HCT116 (cell line): ENCODE measurements at regions of chr5 and their contacts with region 1.

Region 1: DNA sequence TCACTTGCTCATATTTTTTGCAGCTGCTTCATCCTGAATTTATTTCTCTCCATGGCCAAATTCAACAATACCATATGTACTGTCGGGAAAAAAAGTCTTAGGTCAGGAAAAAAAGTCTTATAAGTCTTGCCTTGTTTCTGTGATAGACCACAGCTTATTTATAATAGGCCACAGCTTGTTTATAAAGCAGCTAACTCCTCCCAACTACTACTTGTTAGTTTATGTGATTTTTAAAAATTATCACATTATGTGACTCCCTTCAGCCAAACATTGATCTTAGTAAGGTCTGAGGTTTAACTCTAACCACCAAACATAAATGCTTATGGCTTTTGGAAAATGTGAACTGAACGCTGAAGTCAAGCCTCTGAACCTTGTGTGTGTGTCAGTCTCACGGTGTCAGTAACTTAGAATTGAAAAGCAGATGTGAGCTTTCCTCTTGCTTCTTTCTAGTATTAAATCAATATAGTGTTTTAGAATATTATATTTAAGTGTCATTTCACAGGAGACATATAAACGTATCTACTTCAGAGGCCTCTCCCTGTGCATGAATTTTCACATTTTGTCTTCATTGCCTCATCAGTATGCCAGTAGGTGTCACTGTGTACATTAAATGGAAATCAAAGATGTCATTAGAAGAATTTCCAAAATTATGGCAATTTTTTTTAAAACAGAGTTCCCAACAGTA is 51.3 kb downstream of the SNX24 start:
- DNase-seq: peak; percentile 7
- ATAC-seq: no peak
- H3K4me3 ChIP-seq: no peak overlapping the region
- H3K27ac ChIP-seq: no peak overlapping the region
- H3K4me1 ChIP-seq: no peaks in the 10 kb centered on the region
- H3K27me3 ChIP-seq: no peaks in the 10 kb centered on the region
- CTCF ChIP-seq: peak; percentile 46 to 63 (median 52); a peak in 5 of 6 replicates
- POLR2A ChIP-seq: no peak
- RAD21 ChIP-seq: peak; percentile 65

Region 2: DNA sequence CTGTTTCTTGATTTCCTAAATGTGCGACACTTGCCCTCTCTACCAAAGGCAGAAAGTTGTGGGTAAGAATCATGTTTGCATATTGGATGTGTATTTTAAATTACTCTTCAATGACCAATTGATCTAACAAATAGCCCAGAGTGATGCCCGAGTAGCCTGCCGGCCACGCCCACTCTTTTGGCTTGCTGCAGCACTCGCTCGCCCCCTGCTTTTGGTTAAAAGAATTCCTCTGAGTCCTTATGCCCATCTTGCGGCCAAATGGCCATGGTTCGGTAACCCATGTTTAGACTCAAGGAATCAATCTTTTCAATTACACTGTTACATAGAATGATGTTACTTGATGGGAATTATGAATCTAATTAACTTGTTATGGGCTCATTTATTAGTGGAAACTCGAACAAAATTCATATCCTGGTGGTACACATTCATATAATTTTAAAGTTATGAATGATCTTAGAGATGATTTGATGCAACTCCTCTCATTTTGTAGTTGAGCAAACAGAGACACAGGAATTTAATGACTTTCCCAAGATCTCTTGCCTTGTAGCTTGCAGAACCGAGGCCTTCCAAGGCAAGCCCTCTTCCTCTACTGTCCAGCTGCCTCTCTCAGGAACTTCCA is 103.3 kb after region 1 on chr5:
- CTCF ChIA-PET with region 1: no interaction called
- POLR2A ChIA-PET with region 1: no interaction called
- RAD21 ChIA-PET with region 1: no interaction called
- intact Hi-C with region 1: loop called (anchors 5 kb)
- DNase-seq: peak; percentile 36
- ATAC-seq: peak; percentile 87
- H3K4me3 ChIP-seq: no peak overlapping the region
- H3K27ac ChIP-seq: no peak overlapping the region
- H3K4me1 ChIP-seq: no peaks in the 10 kb centered on the region
- H3K27me3 ChIP-seq: no peaks in the 10 kb centered on the region
- CTCF ChIP-seq: peak; percentile 54 to 77 (median 73); a peak in 5 of 6 replicates
- POLR2A ChIP-seq: no peak
- RAD21 ChIP-seq: peak; percentile 78

Region 3: DNA sequence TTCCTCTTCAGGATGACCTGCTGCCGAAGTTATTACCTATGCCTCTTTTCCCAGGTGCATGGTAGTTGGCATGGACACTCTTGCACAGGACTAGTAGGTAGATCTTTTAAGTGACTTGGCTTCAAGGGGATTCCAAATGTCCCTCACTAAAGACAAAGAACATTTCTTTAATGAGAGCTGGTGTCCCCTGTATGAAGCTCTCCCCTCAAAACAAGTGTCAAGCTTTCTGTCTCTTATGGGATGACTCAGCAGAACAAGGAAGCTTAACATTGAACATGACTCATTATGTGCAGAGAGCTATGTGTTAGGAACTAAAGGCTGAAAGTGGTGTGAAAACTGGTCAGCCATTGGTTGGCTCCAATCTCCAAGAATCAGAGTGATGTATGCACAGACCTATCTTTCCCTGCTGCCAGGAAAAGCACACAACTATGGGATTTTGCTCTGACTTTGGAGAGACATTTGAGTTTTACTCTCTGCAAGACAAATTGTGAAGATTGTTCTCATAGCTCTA is 312.8 kb after region 1 on chr5:
- CTCF ChIA-PET with region 1: no interaction called
- POLR2A ChIA-PET with region 1: no interaction called
- RAD21 ChIA-PET with region 1: no interaction called
- intact Hi-C with region 1: loop called (anchors 5 kb)
- DNase-seq: peak; percentile 48
- ATAC-seq: peak; percentile 81
- H3K4me3 ChIP-seq: no peak overlapping the region
- H3K27ac ChIP-seq: no peak overlapping the region
- H3K4me1 ChIP-seq: peaks cover 0 to 11% of the 10 kb centered on the region in 2 experiments; a peak in 2 of 4 replicates
- H3K27me3 ChIP-seq: no peaks in the 10 kb centered on the region
- CTCF ChIP-seq: no peak
- POLR2A ChIP-seq: no peak
- RAD21 ChIP-seq: no peak

Region 4: GRCh38 chr5:123273984-123274383 is 377.2 kb after region 1 on chr5:
- CTCF ChIA-PET with region 1: no interaction called
- POLR2A ChIA-PET with region 1: no interaction called
- RAD21 ChIA-PET with region 1: no interaction called
- intact Hi-C with region 1: loop called (anchors 5 kb)
- DNase-seq: no peak
- ATAC-seq: peak; percentile 40; the same call in 1 of the 2 replicates
- H3K4me3 ChIP-seq: no peak overlapping the region
- H3K27ac ChIP-seq: no peak overlapping the region
- H3K4me1 ChIP-seq: no peaks in the 10 kb centered on the region
- H3K27me3 ChIP-seq: no peaks in the 10 kb centered on the region
- CTCF ChIP-seq: peak; percentile 10 to 40 (median 16); a peak in 3 of 6 replicates
- POLR2A ChIP-seq: no peak
- RAD21 ChIP-seq: no peak; the same call in 1 of the 2 replicates

Region 5: DNA sequence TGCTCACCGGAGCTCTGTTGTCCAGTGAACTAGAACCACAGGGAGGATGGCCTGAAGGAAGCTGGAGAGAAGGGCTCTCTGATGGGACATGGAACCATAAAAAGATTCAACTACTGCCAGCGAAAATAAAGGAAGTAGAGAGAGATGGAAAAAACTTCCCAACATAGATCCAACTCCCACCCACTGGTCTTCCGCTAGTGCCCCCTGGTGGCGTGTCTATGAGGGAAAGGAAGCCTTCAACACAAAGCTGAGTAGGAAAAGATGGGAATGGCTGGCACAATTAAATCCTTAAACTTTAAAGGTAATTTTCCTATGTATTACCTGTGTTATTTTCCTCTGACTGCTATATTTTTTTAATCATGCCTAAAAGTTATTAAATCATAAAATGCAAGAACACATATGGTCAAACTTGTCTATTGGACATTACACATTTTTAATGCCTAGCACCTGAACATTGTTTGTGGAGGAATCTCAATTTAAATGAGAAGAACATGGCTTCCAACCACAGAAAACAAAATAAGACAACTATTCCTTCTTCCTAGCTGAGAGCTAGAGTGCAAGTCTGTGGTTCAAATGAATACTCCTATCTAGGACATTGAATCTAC is 474.9 kb after region 1 on chr5:
- CTCF ChIA-PET with region 1: no interaction called
- POLR2A ChIA-PET with region 1: no interaction called
- RAD21 ChIA-PET with region 1: no interaction called
- intact Hi-C with region 1: loop called (anchors 1 kb)
- DNase-seq: no peak
- ATAC-seq: peak; percentile 70
- H3K4me3 ChIP-seq: no peak overlapping the region
- H3K27ac ChIP-seq: no peak overlapping the region
- H3K4me1 ChIP-seq: no peaks in the 10 kb centered on the region
- H3K27me3 ChIP-seq: no peaks in the 10 kb centered on the region
- CTCF ChIP-seq: peak in 2 of 3 experiments; percentile 55 to 67; a peak in 4 of 6 replicates
- POLR2A ChIP-seq: no peak
- RAD21 ChIP-seq: peak; percentile 31; the same call in 1 of the 2 replicates

Region 6: DNA sequence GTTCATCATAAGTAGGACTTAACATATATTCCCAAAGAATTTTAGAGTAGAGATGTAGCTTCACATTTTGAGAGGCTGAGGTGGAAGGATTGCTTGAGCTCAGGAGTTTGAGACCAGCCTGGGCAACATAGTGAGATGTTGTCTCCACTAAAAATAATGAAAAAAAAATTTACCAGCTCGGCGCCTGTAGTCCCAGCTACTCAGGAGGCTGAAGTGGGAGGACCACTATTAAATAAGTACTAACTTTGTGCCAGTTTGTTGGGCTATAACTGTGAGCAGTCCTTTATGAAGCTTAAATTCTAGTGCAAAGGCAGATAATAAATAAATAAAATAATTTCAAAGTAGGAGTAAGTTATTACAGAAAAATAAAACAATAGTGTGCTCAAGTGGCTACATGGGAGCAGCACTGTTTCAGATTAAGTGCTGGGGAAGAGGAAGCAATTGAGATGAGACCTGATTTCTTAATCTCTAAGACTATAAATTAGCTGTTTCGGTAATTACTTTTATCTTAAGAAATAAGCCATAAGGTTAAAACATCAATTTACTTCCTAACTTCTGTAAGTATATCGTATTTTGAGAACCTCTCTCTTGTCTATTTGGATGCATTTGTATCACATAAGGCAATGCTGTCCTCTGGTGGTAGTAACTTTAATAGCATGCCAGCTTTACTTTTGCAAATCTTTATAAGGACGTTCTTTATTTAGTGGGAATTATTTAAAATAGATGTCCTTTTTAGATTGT is 714.1 kb after region 1 on chr5:
- CTCF ChIA-PET with region 1: no interaction called
- POLR2A ChIA-PET with region 1: no interaction called
- RAD21 ChIA-PET with region 1: no interaction called
- intact Hi-C with region 1: loop called (anchors 1 kb)
- DNase-seq: peak; percentile 54
- ATAC-seq: peak; percentile 75
- H3K4me3 ChIP-seq: no peak overlapping the region
- H3K27ac ChIP-seq: no peak overlapping the region
- H3K4me1 ChIP-seq: no peaks in the 10 kb centered on the region
- H3K27me3 ChIP-seq: no peaks in the 10 kb centered on the region
- CTCF ChIP-seq: peak; percentile 66 to 99 (median 84); a peak in 5 of 6 replicates
- POLR2A ChIP-seq: no peak
- RAD21 ChIP-seq: peak; percentile 86